Posterior vena cava (tissue), 2 donors: ENCODE measurements at regions of chr15 and their contacts with region 1.

Region 1: GRCh38 chr15:75201609-75202250 is at the start of gene C15orf39:
- DNase-seq: peak; percentile 93
- total RNA-seq, gene C15orf39: 25.8 to 26.4 TPM

Region 2: GRCh38 chr15:74956648-74957300 is 245.0 kb before region 1 on chr15 and contains the start of gene RPP25:
- intact Hi-C with region 1: loop called in 1 of 2 experiments (anchors 10 kb)
- DNase-seq: peak; percentile 93
- total RNA-seq, gene RPP25: 7.5 to 9.3 TPM

Region 3: DNA sequence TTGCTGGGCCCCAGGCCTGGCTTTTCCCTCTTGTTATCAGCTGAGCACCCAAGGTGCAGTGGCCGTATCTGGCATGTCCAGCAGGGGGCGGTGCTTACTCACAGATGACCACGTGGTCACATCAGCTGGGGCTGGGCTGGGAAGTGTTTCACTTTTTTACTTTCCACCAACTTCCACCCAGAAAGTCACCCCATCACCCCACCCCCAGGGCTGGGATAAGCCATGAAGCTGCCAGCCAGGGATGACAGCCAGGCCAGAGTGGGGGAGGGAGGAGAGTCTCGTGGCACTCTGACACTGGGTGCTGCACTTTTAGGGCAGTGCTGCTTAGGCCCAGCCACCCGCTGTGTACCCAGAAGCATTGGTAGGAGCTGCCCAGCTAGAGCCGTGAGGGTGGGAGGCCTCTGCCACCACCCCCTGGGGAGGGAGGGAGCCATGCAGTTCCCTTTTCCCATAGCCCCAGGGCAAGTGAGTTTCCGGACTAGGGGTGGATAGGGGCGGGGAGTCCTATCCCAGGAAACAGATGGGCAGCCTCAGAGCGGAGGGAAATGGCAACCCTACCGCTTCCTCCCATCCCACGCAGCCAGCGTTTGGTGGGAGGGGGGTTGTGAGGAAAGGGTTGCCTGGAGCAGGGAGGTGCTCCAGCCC is 172.2 kb before region 1 on chr15:
- intact Hi-C with region 1: loop called (anchors 2 to 5 kb)
- DNase-seq: peak; percentile 98

Region 4: DNA sequence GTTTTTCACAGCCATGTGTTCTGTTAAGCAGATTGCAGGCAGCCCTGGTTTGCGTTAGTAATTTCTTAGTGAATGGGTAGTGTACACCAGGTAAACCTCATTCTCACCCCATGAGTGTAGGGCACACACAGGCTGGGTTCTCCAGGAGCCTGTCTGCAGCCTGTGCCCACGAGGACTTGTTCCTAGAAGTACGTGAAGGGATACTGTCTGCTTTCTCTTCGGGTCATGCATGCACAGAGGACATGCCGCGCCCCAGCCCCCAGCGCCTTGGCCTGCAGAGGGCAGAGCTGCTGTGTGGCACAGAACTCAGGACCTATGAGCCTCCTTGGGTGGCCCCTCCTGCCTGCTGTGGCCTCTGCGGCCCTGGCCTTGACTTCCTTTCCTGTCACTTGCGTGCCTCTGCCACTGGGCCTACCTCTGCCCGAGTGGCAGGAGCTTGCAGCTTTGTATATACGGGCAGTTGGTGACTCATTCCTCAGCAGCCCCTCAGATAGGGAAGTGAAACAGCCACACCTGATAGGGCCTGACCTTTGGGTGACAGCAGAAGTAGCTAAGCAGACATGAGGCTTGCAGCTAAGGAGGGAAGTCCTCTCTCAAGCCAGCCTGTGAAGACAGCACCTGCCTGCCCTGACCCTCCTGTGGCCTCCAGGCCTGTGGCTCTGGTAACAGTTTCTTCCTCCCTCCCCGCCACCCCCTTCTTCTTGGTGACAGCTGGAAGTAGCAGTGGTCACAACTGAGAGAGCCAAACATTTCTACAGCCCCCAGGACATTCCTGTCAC is 158.8 kb before region 1 on chr15:
- intact Hi-C with region 1: loop called (anchors 2 kb)
- DNase-seq: peak; percentile 95

Region 5: DNA sequence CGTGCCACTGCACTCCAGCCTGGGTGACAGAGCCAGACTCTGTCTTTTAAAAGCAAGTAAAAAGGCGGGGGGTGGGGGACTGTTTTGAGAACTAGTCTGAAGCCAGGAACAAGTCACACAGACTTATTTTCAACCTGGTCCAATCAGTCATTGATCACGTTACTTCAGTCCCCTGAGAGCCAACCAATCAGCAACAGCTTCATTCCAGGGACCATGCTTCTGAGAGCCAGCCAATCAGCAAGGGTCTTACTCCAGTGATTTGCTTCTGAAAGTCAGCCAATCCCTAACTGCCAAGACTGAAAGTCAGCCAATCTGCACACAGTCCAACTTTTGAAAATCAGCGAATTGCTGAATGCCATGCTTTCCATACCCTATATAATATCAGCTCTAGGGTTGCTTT is 48.6 kb before region 1 on chr15:
- intact Hi-C with region 1: no loop called
- DNase-seq: no peak

Region 6: DNA sequence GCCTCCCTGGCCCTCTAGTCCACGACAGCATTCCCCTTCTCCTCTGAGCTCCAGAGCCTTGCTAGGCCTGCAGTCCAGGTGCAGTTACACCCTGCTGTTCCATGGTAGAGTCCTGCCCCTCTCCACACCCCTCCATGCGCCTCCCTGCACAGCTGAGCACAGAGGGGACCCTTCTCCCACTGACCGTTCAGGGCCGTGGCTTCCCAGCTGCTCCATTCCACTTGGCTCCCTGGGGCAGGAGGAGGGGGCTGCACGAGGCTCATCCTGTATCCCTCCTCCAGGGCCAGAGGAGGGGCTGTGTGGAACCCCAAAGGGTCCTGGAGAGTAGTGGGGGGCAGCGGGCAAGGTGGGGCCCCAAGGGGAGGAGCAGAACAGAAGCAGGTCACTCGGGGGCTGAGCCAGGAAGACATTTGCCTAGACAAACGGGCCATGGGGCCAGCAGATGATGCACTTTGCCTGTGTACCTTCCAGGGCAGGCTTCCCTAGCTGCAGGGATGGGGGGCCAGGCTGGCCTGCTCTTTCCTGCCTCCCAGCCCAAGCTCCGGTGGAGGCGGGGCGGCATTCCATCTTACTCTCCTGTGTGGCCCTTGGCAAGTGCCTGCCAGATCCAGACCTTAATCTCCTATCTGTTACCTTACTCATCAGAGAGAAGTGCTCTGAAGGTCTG is 35.7 kb after region 1 on chr15:
- intact Hi-C with region 1: no loop called
- DNase-seq: peak; percentile 72

Region 7: DNA sequence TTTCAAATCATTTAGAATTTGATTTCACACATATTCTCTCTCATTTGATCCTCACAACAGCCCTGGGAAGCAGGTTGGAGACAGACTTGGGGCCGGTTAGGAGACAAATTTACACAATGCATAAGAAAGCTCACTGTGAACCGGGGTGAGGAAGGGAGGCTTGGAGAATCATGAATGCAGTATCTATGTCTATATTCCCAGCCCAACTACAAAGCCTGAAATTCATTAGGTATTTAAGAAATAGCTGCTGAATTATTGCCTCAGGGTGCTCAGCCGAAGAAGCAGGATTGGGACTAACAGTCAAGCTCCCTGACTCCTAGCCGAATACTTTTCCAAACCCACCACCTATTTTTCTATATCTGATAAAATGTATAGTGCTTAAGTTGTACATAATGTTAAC is 48.0 kb after region 1 on chr15:
- intact Hi-C with region 1: no loop called
- DNase-seq: no peak